ENCODE measurements at regions of chr1 and their contacts with region 1.

Region 1: DNA sequence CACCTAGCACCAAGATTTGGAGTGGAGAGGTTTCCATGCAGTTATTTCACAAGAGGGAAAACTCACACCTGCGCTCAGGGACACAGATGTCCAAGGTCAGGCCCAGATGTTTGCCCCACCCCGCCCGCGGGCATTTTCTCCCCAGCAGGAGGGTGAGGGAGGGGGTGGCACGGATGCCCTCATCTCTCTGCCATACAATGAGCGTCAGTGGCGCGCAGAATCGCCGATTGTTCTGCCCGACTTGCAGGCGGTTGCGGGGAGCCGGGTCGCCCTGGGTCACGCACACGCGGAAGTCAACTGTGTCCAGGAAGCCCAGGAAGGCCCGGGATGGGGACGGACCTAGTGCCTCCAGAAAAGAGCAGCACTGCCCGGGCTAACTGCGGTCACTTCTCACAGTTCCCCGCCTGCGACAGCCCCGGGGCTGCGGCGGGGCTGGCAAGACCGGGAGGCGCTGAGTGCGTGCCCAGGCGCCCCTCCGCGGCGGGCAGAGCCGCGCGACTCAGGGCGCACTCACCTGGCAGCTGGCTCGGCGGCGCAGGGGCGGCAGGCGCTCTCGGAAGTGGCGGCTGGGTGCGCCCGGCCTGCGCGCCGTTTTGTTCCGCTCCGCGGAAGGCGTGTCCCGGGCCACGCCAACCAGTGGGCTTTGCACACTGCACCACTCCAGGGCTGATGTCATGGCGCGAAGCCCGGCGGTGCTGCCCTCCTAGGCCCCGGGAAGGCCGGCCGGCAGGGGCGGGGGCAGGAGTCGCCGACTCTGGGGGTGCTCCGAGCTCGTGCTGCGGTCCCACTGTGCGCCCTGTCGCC is at the start of gene CSRP1:
- DNase-seq: peak; percentile 89
- H3K4me3 Mint-ChIP-seq: peak within 1 kb of the TSS; percentile 83
- H3K27ac Mint-ChIP-seq: peak within 1 kb of the TSS; percentile 82
- H3K4me1 Mint-ChIP-seq: peaks cover 42% of the 10 kb centered on the region
- H3K27me3 Mint-ChIP-seq: no peaks in the 10 kb centered on the region
- total RNA-seq, gene CSRP1: 35.7 to 36.6 TPM

Region 2: DNA sequence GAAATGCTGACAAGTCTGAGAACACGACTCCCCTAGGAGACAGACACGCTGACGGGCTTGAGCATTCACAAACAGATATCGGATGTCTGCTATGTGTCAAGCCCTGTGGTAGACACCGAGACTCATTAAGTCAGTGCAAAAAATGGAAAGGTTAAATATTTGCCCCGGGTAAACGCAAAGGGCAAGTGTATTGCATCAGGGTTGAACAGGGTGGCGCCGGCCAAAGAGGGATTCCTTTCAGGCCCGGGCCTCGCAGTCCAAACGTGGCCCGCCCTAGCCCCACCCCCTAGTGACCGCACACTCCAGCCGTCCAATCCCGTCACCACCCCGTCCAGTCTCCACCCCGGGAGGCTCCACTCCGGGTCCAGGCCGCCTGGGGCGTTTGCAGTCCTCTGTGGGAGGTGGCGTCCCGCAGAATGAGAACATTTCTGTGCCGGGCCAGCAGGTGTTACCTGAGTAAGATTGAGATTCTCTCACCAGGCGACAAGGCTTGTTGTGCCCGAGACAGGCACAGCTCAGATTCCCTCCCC is 336.2 kb before region 1 on chr1:
- CTCF ChIA-PET with region 1: no interaction called
- intact Hi-C with region 1: loop called (anchors 2 kb)
- DNase-seq: peak; percentile 93
- H3K4me3 Mint-ChIP-seq: peak overlapping the region; percentile 76
- H3K27ac Mint-ChIP-seq: peak overlapping the region; percentile 85
- H3K4me1 Mint-ChIP-seq: peaks cover 21% of the 10 kb centered on the region
- H3K27me3 Mint-ChIP-seq: peaks cover 2% of the 10 kb centered on the region

Region 3: DNA sequence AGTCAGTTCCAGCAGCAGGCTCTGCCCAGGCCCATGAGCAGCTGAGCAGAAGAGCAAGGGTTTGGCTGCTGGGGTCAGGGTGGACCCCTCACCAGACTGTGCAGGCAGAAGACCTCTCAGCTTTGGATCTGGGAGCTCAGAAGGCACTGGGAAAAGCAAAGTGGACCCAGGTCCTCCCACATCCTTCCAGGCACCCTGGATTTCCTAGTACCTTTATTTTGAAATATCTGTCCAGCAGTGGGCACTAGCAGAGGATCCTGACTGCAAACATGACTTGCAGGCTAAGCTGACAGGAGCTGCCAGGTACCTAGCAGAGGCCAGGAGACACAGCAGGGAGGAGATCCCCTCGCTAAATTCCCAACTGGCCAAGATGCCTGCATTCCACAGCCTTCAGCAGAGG is 51.1 kb before region 1 on chr1:
- CTCF ChIA-PET with region 1: interaction called, 121 read pairs
- intact Hi-C with region 1: loop called (anchors 2 kb)
- DNase-seq: no peak
- H3K4me3 Mint-ChIP-seq: no peak overlapping the region
- H3K27ac Mint-ChIP-seq: no peak overlapping the region
- H3K4me1 Mint-ChIP-seq: peaks cover 13% of the 10 kb centered on the region
- H3K27me3 Mint-ChIP-seq: peaks cover 17% of the 10 kb centered on the region

Region 4: GRCh38 chr1:201828820-201829774 is 322.3 kb after region 1 on chr1 and contains the start of gene IPO9:
- CTCF ChIA-PET with region 1: no interaction called
- intact Hi-C with region 1: loop called (anchors 2 kb)
- DNase-seq: peak; percentile 98
- H3K4me3 Mint-ChIP-seq: peak within 1 kb of the TSS; percentile 99
- H3K27ac Mint-ChIP-seq: peak within 1 kb of the TSS; percentile 93
- H3K4me1 Mint-ChIP-seq: peaks cover 45% of the 10 kb centered on the region
- H3K27me3 Mint-ChIP-seq: no peaks in the 10 kb centered on the region
- total RNA-seq, gene IPO9: 63.9 to 65.7 TPM